ENCODE measurements at regions of chr3 and their contacts with region 1.

Region 1: DNA sequence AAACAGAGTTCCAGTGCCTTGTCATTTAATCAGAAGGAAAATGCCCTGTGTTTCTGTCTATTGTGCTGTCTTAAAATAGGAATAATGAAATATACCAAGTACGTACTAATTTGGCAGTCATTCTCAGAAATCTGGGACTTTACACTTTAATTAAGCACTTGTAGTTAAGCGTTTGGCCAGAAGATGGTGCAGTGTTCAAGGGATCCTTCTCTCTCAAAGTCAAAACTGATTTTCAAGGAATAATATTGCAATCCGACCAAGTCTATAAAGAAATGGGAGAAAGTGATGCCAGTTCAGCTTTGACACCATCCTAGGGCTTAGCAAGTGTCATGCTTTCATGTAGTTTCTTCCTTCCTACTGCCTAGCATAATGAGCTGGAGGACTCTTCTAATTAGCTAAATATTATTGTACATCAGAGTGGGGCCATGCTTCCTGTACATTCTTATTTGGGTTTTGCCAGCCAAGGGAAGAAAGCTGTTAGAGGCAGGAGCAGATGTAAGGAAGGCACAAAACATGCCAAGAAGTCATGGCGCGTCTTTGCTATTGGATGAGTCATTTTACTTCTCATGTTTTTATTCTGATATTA is 64.8 kb downstream of the SAMMSON start:
- DNase-seq: peak; percentile 7 to 26 (median 12)
- ATAC-seq: no peak
- H3K4me3 ChIP-seq: no peak overlapping the region
- H3K27ac ChIP-seq: no peak overlapping the region
- H3K4me1 ChIP-seq: no peaks in the 10 kb centered on the region
- H3K27me3 ChIP-seq: peaks cover 0 to 2% of the 10 kb centered on the region in 2 experiments; a peak in 3 of 5 replicates
- CTCF ChIP-seq: peak; percentile 17 to 66 (median 53); a peak in 3 of 6 replicates
- EP300 ChIP-seq: no peak
- POLR2A ChIP-seq: no peak
- RAD21 ChIP-seq: peak; percentile 54 to 61

Region 2: DNA sequence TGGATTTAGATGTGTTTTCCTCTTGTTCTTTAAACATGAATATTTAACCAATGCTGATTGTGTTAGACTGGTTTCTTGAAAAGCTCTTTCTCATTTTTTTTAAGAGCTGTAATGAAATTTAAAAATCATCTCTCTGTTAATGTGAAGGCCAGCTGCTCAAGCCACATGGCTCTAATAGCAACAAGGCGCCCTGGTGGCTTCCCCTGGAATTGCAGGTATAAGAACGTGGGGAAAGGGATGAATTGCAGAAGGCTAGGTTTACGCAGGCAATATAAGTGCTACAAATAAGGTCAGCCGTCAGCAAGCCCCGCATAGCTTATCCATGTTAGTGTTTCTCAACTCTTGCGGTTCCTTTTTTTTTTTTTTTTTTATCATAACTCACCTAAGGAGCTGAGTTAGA is 43.8 kb after region 1 on chr3:
- CTCF ChIA-PET with region 1: no interaction called
- POLR2A ChIA-PET with region 1: no interaction called
- in situ Hi-C with region 1: no loop called
- intact Hi-C with region 1: loop called (anchors 2 kb)
- DNase-seq: peak; percentile 32 to 54 (median 37)
- ATAC-seq: peak; percentile 86
- H3K4me3 ChIP-seq: no peak overlapping the region
- H3K27ac ChIP-seq: no peak overlapping the region
- H3K4me1 ChIP-seq: no peaks in the 10 kb centered on the region
- H3K27me3 ChIP-seq: no peaks in the 10 kb centered on the region
- CTCF ChIP-seq: peak; percentile 55 to 60 (median 59)
- EP300 ChIP-seq: no peak
- POLR2A ChIP-seq: no peak
- RAD21 ChIP-seq: peak in 1 of 2 experiments; percentile 39; a peak in 2 of 4 replicates

Region 3: GRCh38 chr3:70358978-70359580 is 294.8 kb after region 1 on chr3:
- CTCF ChIA-PET with region 1: no interaction called
- POLR2A ChIA-PET with region 1: no interaction called
- in situ Hi-C with region 1: no loop called
- intact Hi-C with region 1: loop called (anchors 5 kb)
- DNase-seq: peak in 2 of 4 experiments; percentile 4 to 10
- ATAC-seq: no peak
- H3K4me3 ChIP-seq: no peak overlapping the region
- H3K27ac ChIP-seq: no peak overlapping the region
- H3K4me1 ChIP-seq: no peaks in the 10 kb centered on the region
- H3K27me3 ChIP-seq: no peaks in the 10 kb centered on the region
- CTCF ChIP-seq: peak; percentile 32 to 54 (median 43); a peak in 4 of 6 replicates
- EP300 ChIP-seq: no peak
- POLR2A ChIP-seq: no peak
- RAD21 ChIP-seq: peak in 1 of 2 experiments; percentile 46; a peak in 3 of 4 replicates

Region 4: GRCh38 chr3:70550723-70551319 is 486.5 kb after region 1 on chr3:
- CTCF ChIA-PET with region 1: no interaction called
- POLR2A ChIA-PET with region 1: no interaction called
- in situ Hi-C with region 1: no loop called
- intact Hi-C with region 1: no loop called
- DNase-seq: peak in 1 of 4 experiments; percentile 57
- ATAC-seq: peak; percentile 92
- H3K4me3 ChIP-seq: no peak overlapping the region
- H3K27ac ChIP-seq: no peak overlapping the region
- H3K4me1 ChIP-seq: no peaks in the 10 kb centered on the region
- H3K27me3 ChIP-seq: no peaks in the 10 kb centered on the region
- CTCF ChIP-seq: peak; percentile 51 to 54 (median 53)
- EP300 ChIP-seq: no peak
- POLR2A ChIP-seq: no peak
- RAD21 ChIP-seq: peak; percentile 45 to 63; a peak in 3 of 4 replicates

Region 5: GRCh38 chr3:71652781-71653413 is 1588.6 kb after region 1 on chr3:
- CTCF ChIA-PET with region 1: no interaction called
- POLR2A ChIA-PET with region 1: no interaction called
- in situ Hi-C with region 1: loop called (anchors 25 kb)
- intact Hi-C with region 1: no loop called
- DNase-seq: peak; percentile 16 to 61 (median 28)
- ATAC-seq: peak; percentile 81
- H3K4me3 ChIP-seq: no peak overlapping the region
- H3K27ac ChIP-seq: no peak overlapping the region
- H3K4me1 ChIP-seq: no peaks in the 10 kb centered on the region; a peak in 1 of 5 replicates
- H3K27me3 ChIP-seq: peaks cover under 1% of the 10 kb centered on the region in 2 experiments; a peak in 3 of 5 replicates
- CTCF ChIP-seq: peak in 2 of 3 experiments; percentile 53 to 72; a peak in 4 of 6 replicates
- EP300 ChIP-seq: no peak
- POLR2A ChIP-seq: no peak
- RAD21 ChIP-seq: peak; percentile 64 to 83

Measured in K562 (cell line).